Activated CD4-positive, alpha-beta memory T cell treated with anti-CD3 and anti-CD28 coated beads, Interleukin-2, amount 10 ng/mL, durations not matched to agents 7 days and 5 days (primary cell): ENCODE measurements at regions of chr20 and their contacts with region 1.

Region 1: DNA sequence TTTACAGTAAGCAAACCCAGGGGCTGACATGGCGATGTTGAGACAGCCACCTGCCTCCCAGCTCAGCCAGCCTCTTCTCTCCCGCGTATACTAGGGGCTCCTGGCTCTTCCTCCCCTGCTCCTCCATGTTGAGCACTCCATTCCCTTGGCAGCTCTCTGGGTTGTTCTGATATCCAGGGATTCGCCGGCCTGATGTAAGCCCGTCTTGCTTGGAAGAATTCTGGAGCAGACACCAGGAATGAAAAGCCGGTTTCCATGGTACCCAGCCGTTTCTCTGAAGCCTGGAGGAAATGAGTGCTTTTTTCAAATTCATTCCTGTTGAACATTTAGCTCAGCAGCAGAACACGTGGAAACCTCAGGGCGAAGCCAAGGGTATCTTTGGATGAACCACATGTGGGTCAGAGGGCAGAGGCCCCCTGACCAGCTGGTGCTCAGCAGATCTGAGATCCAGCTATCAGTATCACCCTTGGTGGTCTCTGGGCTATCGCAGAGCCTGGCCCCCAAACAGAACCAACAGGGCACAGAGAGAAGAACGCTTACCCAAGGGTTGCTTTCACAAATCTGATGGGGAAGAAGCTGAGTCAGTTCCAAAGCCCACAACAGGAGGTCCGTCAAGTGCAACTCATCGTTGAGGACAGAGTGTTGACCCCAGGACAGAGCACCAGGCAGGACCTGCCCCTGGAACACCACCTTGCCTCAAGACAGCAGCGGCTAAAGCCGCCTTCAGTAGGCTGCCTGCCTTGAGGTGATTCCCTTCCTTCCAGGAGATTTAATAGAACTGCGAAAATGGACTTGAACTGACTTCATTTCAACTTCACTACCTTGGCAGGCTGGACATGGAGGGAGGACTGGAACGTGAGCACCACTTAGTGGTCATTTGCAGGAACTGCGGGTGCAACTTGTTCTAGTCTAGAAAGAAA is 96.1 kb upstream of the RIN2 start:
- DNase-seq: peak; percentile 52
- H3K4me3 Mint-ChIP-seq: no peak overlapping the region
- H3K27ac Mint-ChIP-seq: no peak overlapping the region
- H3K4me1 Mint-ChIP-seq: no peaks in the 10 kb centered on the region
- H3K27me3 Mint-ChIP-seq: peaks cover 8% of the 10 kb centered on the region

Region 2: DNA sequence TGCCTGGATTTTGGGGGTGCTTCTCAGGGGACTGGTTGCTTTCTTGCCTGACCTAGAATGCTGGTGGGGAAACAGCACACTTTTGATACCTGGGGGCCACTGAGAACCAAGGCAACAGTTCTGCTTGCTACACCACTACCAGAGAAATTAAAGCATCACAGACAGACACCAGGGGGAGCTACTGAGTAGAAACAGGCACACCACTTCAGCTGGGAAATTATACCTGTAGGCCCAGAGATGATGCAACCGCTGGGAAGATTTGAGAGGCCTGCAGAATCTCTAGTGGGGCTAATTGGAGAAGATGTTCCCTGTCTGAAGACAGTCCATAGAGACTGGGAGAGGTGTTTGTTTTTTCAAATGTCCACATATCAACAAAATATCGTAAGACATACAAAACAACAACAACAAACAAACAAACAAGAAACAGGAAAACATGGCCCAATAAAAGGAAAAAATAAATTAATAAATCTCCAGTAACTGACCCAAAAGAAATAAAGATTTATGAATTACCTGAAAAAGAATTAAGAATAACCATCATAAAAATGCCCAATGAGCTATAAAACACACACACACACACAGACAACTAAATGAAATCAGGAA is 33.3 kb before region 1 on chr20:
- CTCF ChIA-PET with region 1: interaction called, 30 read pairs
- POLR2A ChIA-PET with region 1: no interaction called
- DNase-seq: peak; percentile 47
- H3K4me3 Mint-ChIP-seq: no peak overlapping the region
- H3K27ac Mint-ChIP-seq: no peak overlapping the region
- H3K4me1 Mint-ChIP-seq: no peaks in the 10 kb centered on the region
- H3K27me3 Mint-ChIP-seq: no peaks in the 10 kb centered on the region

Region 3: DNA sequence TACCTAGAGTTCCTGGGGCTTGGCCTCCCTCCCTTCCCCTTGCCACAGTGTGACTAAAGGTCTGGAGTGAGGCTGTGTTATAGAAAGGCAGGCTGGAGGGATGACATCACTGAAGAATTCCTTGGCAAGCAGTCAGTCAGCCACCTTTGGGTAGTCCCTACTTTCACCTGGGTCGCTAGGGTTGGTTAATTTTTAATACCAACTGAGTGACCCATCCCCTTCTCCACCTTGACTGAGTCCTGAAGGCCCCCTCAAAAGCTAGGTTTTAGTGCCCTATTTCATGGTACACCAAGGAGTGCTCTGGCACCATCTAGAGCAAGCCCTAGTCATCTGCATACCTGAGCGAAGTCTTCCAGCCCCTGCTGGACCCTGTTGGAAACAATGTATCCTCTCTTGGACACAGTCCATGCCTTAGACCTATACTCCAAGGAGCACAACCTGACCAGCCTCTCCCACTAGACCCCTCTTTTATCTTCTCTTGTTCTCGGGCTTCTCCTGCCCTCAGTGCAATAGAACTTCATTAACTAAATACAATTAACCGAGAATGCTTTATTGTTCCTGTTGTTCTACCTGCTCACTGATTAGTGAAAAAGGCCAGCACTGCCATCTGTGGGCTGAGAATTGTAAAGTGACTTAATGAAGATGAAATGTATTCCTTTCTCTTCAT is 140.6 kb after region 1 on chr20:
- CTCF ChIA-PET with region 1: no interaction called
- POLR2A ChIA-PET with region 1: no interaction called
- DNase-seq: no peak
- H3K4me3 Mint-ChIP-seq: no peak overlapping the region
- H3K27ac Mint-ChIP-seq: no peak overlapping the region
- H3K4me1 Mint-ChIP-seq: no peaks in the 10 kb centered on the region
- H3K27me3 Mint-ChIP-seq: no peaks in the 10 kb centered on the region